ENCODE measurements at regions of chr19 and their contacts with region 1.

Region 1: GRCh38 chr19:55418185-55418584 is 10.6 kb upstream of the UBE2S start:
- DNase-seq: peak; percentile 41 to 71
- H3K4me3 ChIP-seq: no peak overlapping the region
- H3K27ac ChIP-seq: no peak overlapping the region
- H3K4me1 ChIP-seq: peaks cover 0 to 2% (median 0%) of the 10 kb centered on the region in 4 experiments; a peak in 1 of 7 replicates
- H3K27me3 ChIP-seq: peaks cover 0 to 9% (median 2%) of the 10 kb centered on the region in 4 experiments; a peak in 2 of 7 replicates
- CTCF ChIP-seq: peak; percentile 45 to 85 (median 72)
- EP300 ChIP-seq: no peak
- POLR2A ChIP-seq: no peak
- RAD21 ChIP-seq: peak; percentile 93 to 97

Region 2: GRCh38 chr19:55289117-55289796 is 128.9 kb before region 1 on chr19:
- CTCF ChIA-PET with region 1: interaction called, 17 read pairs
- POLR2A ChIA-PET with region 1: no interaction called
- DNase-seq: no peak
- H3K4me3 ChIP-seq: no peak overlapping the region
- H3K27ac ChIP-seq: no peak overlapping the region
- H3K4me1 ChIP-seq: peaks cover 0 to 4% (median 0%) of the 10 kb centered on the region in 4 experiments; a peak in 1 of 7 replicates
- H3K27me3 ChIP-seq: no peaks in the 10 kb centered on the region
- CTCF ChIP-seq: no peak
- EP300 ChIP-seq: no peak
- POLR2A ChIP-seq: no peak
- RAD21 ChIP-seq: no peak

Region 3: DNA sequence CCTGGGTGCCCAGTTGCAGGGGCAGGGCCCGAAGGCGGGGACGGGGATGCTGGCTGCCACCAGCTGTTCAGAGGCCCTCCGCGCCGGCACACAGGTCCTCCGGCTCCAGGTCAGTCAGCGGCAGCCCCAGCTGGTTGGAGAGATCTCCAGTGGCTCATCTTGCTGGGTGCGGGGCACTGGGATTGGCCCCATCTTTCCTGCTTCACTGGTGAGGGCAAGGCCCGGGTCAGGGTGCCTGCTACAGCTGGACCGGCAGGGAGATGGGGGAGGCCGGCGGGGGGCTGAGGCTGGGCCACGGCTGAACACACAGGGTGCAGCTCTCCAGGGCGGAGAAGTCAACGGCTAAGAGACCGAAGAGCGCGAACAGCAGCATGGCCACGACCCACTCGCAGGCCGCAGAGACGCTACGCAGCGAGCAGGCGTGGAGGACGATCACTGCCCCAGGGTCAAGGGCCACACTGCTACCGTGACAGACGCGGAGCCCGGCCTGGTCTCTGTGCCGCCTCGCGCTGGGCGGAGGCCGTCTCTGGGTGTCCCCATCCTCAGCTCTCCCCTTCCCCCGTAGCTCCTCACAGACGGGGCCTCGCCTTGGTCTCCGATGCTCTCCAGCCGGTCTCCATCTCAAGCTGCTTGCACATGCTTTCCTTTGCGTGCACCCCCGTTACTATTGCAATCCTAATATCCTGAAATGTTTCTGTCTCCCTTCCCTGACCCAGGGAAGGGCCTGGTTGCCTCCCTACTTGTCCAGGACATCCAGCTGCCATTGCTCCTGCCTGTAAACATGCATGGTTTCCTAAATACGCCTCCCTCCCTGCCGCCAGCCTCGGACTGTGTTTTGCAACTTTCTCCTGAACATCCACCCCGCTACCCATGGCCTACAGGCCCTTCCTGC is 105.3 kb before region 1 on chr19:
- CTCF ChIA-PET with region 1: interaction called, 11 read pairs
- POLR2A ChIA-PET with region 1: interaction called, 3 read pairs
- DNase-seq: no peak
- H3K4me3 ChIP-seq: no peak overlapping the region
- H3K27ac ChIP-seq: no peak overlapping the region
- H3K4me1 ChIP-seq: no peaks in the 10 kb centered on the region
- H3K27me3 ChIP-seq: no peaks in the 10 kb centered on the region
- CTCF ChIP-seq: no peak
- EP300 ChIP-seq: no peak
- POLR2A ChIP-seq: no peak; a peak in 1 of 3 replicates
- RAD21 ChIP-seq: no peak

Region 4: GRCh38 chr19:55391702-55392615 is 26.2 kb before region 1 on chr19:
- CTCF ChIA-PET with region 1: interaction called, 12 read pairs
- POLR2A ChIA-PET with region 1: interaction called, 874 read pairs
- DNase-seq: no peak
- H3K4me3 ChIP-seq: peak overlapping the region in 1 of 4 experiments; percentile 14; a peak in 2 of 8 replicates
- H3K27ac ChIP-seq: no peak overlapping the region
- H3K4me1 ChIP-seq: peaks cover 0 to 44% (median 34%) of the 10 kb centered on the region in 4 experiments; a peak in 6 of 7 replicates
- H3K27me3 ChIP-seq: no peaks in the 10 kb centered on the region
- CTCF ChIP-seq: no peak
- EP300 ChIP-seq: no peak
- POLR2A ChIP-seq: peak in 1 of 2 experiments; percentile 10; a peak in 1 of 3 replicates
- RAD21 ChIP-seq: no peak

Region 5: GRCh38 chr19:55398200-55398925 is 19.8 kb before region 1 on chr19:
- CTCF ChIA-PET with region 1: interaction called, 16 read pairs
- POLR2A ChIA-PET with region 1: interaction called, 874 read pairs
- DNase-seq: no peak
- H3K4me3 ChIP-seq: no peak overlapping the region
- H3K27ac ChIP-seq: no peak overlapping the region
- H3K4me1 ChIP-seq: peaks cover 0 to under 1% (median under 1%) of the 10 kb centered on the region in 4 experiments; a peak in 4 of 7 replicates
- H3K27me3 ChIP-seq: no peaks in the 10 kb centered on the region
- CTCF ChIP-seq: no peak
- EP300 ChIP-seq: no peak
- POLR2A ChIP-seq: no peak
- RAD21 ChIP-seq: no peak

Region 6: GRCh38 chr19:55467236-55468053 is 49.3 kb after region 1 on chr19:
- CTCF ChIA-PET with region 1: interaction called, 13 read pairs
- POLR2A ChIA-PET with region 1: no interaction called
- DNase-seq: peak in 1 of 2 experiments; percentile 94
- H3K4me3 ChIP-seq: no peak overlapping the region
- H3K27ac ChIP-seq: no peak overlapping the region
- H3K4me1 ChIP-seq: peaks cover 3 to 23% (median 11%) of the 10 kb centered on the region in 4 experiments
- H3K27me3 ChIP-seq: no peaks in the 10 kb centered on the region; a peak in 1 of 7 replicates
- CTCF ChIP-seq: peak; percentile 87 to 93 (median 89)
- EP300 ChIP-seq: peak in 1 of 2 experiments; percentile 63; a peak in 1 of 3 replicates
- POLR2A ChIP-seq: no peak
- RAD21 ChIP-seq: peak; percentile 56 to 73

Region 7: DNA sequence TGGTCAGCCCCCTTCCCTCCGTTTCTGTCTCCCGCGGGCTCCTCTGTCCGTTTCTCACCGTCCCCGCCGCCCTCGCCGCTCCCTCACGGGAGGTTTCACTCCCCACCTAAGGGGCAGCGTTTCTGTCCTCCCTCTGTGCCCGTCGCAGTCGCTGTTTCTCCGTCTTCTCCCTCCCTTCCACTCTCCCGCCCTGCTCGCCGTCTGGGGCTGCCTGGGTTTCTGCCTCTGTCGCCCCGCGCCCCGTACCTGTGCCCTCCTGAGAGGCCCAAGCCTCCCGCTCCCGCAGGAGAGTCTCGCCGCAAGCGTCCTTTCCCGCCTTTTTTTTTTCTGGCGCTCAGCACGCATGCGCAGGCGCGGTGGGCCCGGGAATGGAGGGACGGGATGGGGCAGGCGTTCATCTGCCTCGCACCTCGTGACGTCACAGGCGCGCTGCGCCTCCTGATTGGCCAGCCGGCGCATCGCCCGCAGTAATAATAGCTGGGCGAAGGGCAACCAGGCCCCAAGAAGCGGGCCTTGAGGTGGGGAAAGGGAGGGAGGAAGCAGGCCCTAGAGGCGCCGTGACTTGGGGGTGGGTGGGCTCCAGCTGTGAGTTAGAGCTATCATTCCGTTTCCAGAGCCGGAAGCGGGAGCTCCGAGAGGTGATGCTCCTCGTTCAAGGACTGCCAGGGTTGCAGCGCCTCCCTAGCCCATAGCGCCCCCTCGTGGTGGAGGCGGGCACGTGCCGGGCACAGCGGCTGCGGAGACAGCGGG is 85.5 kb after region 1 on chr19:
- CTCF ChIA-PET with region 1: interaction called, 12 read pairs
- POLR2A ChIA-PET with region 1: no interaction called
- DNase-seq: peak; percentile 78 to 100
- H3K4me3 ChIP-seq: peak overlapping the region in 1 of 4 experiments; percentile 43; a peak in 2 of 8 replicates
- H3K27ac ChIP-seq: no peak overlapping the region
- H3K4me1 ChIP-seq: no peaks in the 10 kb centered on the region
- H3K27me3 ChIP-seq: peaks cover 11 to 23% (median 17%) of the 10 kb centered on the region in 4 experiments
- CTCF ChIP-seq: peak; percentile 95 to 98 (median 95)
- EP300 ChIP-seq: no peak
- POLR2A ChIP-seq: no peak
- RAD21 ChIP-seq: peak; percentile 93

Measured in H1 (cell line).